Activated CD8-positive, alpha-beta T cell treated with anti-CD3 and anti-CD28 coated beads for 36 hours (primary cell): ENCODE measurements at regions of chr17 and their contacts with region 1.

Region 1: DNA sequence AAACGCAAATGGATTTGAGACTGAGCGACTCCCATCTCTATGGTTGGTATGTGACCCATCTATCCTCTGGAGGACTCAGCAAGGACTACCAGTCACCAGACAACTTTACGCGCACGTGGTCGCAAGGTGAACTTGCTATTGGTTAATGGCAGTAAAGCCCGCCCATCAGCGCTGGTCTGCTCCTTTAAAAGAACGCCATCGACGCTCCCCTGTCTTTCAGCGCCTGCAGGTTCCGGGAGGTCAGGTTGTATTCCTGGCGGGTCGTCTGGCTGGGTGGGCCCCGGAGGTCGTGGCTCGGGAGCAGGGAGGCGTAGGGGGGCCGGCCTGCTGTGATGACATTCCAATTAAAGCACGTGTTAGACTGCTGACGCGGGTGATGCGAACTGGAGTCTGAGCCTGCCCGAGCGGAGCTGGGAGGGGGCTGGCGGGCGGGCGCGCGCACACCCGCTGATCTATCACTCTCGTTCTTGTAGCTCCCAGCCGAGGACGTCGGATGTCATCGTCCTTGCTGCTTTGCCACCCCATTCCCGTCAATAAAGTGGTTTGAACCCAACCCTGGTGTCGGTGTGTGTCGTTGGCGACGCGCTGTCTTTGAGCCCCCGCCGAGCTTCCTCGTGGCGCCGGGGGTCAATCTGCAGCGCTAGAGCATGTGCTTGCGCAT is 15.9 kb upstream of the ERN1 start:
- DNase-seq: peak; percentile 98
- ATAC-seq: peak; percentile 96
- H3K4me3 Mint-ChIP-seq: no peak overlapping the region
- H3K27ac Mint-ChIP-seq: no peak overlapping the region
- H3K4me1 Mint-ChIP-seq: peaks cover 18% of the 10 kb centered on the region
- H3K27me3 Mint-ChIP-seq: no peaks in the 10 kb centered on the region
- CTCF ChIP-seq: no peak

Region 2: GRCh38 chr17:64020056-64020766 is 125.7 kb before region 1 on chr17 and contains the start of gene ICAM2:
- CTCF ChIA-PET with region 1: interaction called, 419 read pairs
- POLR2A ChIA-PET with region 1: interaction called, 47 read pairs
- intact Hi-C with region 1: loop called (anchors 5 kb)
- DNase-seq: peak; percentile 96
- ATAC-seq: peak; percentile 72
- H3K4me3 Mint-ChIP-seq: peak within 1 kb of the TSS; percentile 94
- H3K27ac Mint-ChIP-seq: peak within 1 kb of the TSS; percentile 98
- H3K4me1 Mint-ChIP-seq: peaks cover 66% of the 10 kb centered on the region
- H3K27me3 Mint-ChIP-seq: no peaks in the 10 kb centered on the region
- CTCF ChIP-seq: no peak
- total RNA-seq, gene ICAM2: 53.3 to 53.7 TPM

Region 3: GRCh38 chr17:64063766-64064224 is 82.1 kb before region 1 on chr17:
- CTCF ChIA-PET with region 1: interaction called, 3 read pairs
- POLR2A ChIA-PET with region 1: interaction called, 27 read pairs
- intact Hi-C with region 1: no loop called
- DNase-seq: peak; percentile 78
- ATAC-seq: peak; percentile 45
- H3K4me3 Mint-ChIP-seq: peak overlapping the region; percentile 54
- H3K27ac Mint-ChIP-seq: peak overlapping the region; percentile 78
- H3K4me1 Mint-ChIP-seq: peaks cover 73% of the 10 kb centered on the region
- H3K27me3 Mint-ChIP-seq: no peaks in the 10 kb centered on the region
- CTCF ChIP-seq: peak; percentile 71

Region 4: GRCh38 chr17:64155751-64156544 is 10.1 kb after region 1 on chr17:
- CTCF ChIA-PET with region 1: interaction called, 6 read pairs
- POLR2A ChIA-PET with region 1: interaction called, 28 read pairs
- intact Hi-C with region 1: no loop called
- DNase-seq: no peak
- ATAC-seq: no peak
- H3K4me3 Mint-ChIP-seq: no peak overlapping the region
- H3K27ac Mint-ChIP-seq: no peak overlapping the region
- H3K4me1 Mint-ChIP-seq: no peaks in the 10 kb centered on the region
- H3K27me3 Mint-ChIP-seq: no peaks in the 10 kb centered on the region
- CTCF ChIP-seq: no peak

Region 5: DNA sequence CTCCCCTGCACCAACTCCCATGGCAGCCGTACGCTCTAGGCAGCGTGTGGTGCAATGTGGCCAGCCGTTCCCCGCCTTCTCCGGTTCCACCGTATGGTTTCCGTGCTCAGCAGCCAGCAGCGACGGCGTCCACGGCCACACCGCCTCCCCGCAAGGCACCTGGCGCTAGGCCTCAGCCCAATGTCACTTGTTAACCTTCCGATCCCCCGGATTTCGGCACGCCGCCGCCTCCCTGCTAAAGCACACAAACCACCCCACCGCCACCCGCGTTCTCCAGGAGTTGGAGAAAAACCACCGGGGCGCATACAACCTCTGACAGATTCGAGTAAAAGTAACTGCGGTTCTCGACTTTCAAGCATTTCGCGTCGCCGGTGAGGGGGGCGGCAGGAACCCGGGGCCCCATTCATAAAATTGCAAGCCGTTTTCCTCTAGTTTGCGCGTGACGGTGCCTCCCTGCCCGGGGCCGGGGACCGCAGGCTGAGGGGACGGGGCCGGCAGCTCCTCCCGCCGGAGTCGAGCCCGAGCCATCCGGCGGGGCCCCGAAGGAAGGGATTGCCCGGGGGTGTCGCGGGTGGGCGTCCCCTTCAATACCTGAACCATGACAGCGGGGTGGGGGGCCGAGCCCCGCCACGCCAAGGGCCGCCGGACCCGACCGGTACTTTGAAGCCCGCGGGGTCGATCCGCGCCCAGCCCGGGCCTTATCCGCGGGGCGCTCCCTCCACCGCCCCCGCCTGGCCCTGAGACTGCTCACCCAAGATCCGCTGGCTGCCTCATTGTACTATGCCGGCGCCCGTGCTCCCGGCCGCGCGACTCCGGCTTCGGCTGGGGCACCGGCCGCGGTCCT is 116.8 kb after region 1 on chr17 and contains the start of gene TEX2:
- CTCF ChIA-PET with region 1: no interaction called
- POLR2A ChIA-PET with region 1: interaction called, 47 read pairs
- intact Hi-C with region 1: loop called (anchors 5 kb)
- DNase-seq: peak; percentile 77
- ATAC-seq: peak; percentile 34
- H3K4me3 Mint-ChIP-seq: peak within 1 kb of the TSS; percentile 98
- H3K27ac Mint-ChIP-seq: peak within 1 kb of the TSS; percentile 95
- H3K4me1 Mint-ChIP-seq: peaks cover 33% of the 10 kb centered on the region
- H3K27me3 Mint-ChIP-seq: no peaks in the 10 kb centered on the region
- CTCF ChIP-seq: no peak
- total RNA-seq, gene TEX2: 14.0 to 14.5 TPM

Region 6: DNA sequence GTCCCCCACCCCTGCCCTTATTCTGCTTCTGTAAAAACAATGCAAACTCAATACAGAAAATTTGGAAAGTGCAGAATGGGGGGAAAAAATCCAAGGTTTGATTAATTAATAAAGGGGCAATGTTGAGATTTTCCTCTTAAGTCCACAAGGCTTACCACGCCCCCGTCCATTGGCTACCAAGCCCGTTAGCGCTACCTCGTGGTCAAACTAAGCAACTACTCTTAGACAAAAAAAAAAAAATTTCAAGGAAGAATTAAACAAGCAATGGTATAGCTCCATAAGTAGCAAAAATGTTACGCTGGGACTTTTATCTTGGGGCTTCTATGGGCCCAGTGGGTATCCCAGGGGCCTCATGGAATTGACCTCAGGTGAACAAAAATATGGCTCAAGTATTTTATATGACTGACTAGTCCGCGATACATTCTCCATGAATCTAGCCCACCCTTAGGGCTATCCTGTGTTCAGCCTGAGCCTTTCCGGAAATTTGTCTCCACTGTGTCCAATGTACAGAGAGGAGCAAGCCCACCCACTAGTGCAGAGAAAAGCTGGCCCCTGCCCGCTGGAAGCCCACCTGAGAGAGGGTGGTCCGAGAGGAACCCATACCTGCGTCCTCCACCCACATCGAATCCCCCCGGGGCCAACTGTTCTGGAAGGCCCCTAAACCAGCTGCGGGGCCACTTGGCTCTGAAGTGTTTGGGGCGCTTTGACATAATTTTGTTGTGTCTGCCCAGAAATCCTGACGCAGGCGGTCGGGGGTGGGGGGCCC is 136.3 kb after region 1 on chr17:
- CTCF ChIA-PET with region 1: interaction called, 27 read pairs
- POLR2A ChIA-PET with region 1: interaction called, 9 read pairs
- intact Hi-C with region 1: loop called (anchors 5 kb)
- DNase-seq: peak; percentile 74
- ATAC-seq: peak; percentile 77
- H3K4me3 Mint-ChIP-seq: no peak overlapping the region
- H3K27ac Mint-ChIP-seq: no peak overlapping the region
- H3K4me1 Mint-ChIP-seq: peaks cover 2% of the 10 kb centered on the region
- H3K27me3 Mint-ChIP-seq: no peaks in the 10 kb centered on the region
- CTCF ChIP-seq: peak; percentile 84

Region 7: GRCh38 chr17:64506576-64507477 is 360.9 kb after region 1 on chr17 and contains the start of gene CEP95:
- CTCF ChIA-PET with region 1: no interaction called
- POLR2A ChIA-PET with region 1: interaction called, 19 read pairs
- intact Hi-C with region 1: no loop called
- DNase-seq: peak; percentile 98
- ATAC-seq: peak; percentile 70
- H3K4me3 Mint-ChIP-seq: peak within 1 kb of the TSS; percentile 91
- H3K27ac Mint-ChIP-seq: peak within 1 kb of the TSS; percentile 99
- H3K4me1 Mint-ChIP-seq: peaks cover 53% of the 10 kb centered on the region
- H3K27me3 Mint-ChIP-seq: no peaks in the 10 kb centered on the region
- CTCF ChIP-seq: no peak
- total RNA-seq, gene CEP95: 45.2 to 45.7 TPM